ENCODE measurements at regions of chr5 and their contacts with region 1.

Region 1: GRCh38 chr5:134904630-134905245 is at the start of gene PCBD2:
- DNase-seq: peak; percentile 73
- ATAC-seq: peak; percentile 88
- H3K4me3 ChIP-seq: peak within 1 kb of the TSS; percentile 83
- H3K27ac ChIP-seq: peak within 1 kb of the TSS; percentile 91
- H3K4me1 ChIP-seq: peaks cover 24% of the 10 kb centered on the region
- H3K27me3 ChIP-seq: no peaks in the 10 kb centered on the region
- CTCF ChIP-seq: peak; percentile 97 to 98 (median 98)
- EP300 ChIP-seq: no peak
- POLR2A ChIP-seq: peak; percentile 82
- RAD21 ChIP-seq: peak; percentile 92
- polyA plus RNA-seq, gene PCBD2: 6.7 to 7.0 TPM

Region 2: DNA sequence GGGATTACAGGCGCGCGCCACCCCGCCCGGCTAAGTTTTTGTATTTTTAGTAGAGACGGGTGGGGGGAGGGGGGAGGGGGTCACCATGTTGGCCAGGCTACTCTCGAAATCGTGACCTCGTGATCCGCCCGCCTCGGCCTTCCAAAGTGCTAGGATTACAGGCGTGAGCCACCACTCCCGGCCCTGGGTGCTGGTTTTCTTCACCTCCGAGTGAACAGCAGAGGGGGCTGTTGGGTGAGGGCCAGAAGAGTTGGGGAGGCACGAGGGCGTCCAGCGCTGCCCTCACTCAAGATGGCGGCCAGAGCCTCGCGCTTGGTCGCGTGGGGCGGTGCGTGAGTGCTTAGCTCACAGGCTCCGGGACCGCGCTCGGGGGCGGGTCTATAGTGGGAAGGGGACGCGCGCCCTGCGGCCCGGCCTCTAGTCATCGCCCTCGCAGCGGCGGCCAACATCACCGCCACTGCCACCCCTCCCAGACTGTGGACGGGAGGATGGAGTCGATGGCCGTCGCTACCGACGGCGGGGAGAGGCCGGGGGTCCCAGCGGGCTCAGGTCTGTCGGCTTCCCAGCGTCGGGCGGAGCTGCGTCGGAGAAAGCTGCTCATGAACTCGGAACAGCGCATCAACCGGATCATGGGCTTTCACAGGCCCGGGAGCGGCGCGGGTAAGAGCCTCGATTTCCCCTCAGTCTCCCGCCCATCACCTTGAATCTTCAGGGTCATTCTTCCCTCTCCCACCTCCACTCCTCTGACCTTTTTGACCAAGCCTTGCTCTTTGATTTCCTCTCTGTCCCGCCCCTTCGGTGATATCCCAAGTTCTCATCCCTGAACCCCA is 166.4 kb before region 1 on chr5 and contains the start of gene CAMLG:
- CTCF ChIA-PET with region 1: interaction called, 43 read pairs
- POLR2A ChIA-PET with region 1: interaction called, 22 read pairs
- RAD21 ChIA-PET with region 1: interaction called, 14 read pairs
- SMC1A ChIA-PET with region 1: interaction called, 11 read pairs
- in situ Hi-C with region 1: loop called (anchors 5 kb)
- intact Hi-C with region 1: loop called (anchors 1 kb)
- DNase-seq: peak; percentile 92
- ATAC-seq: peak; percentile 97
- H3K4me3 ChIP-seq: peak within 1 kb of the TSS; percentile 90
- H3K27ac ChIP-seq: peak within 1 kb of the TSS; percentile 71
- H3K4me1 ChIP-seq: no peaks in the 10 kb centered on the region
- H3K27me3 ChIP-seq: no peaks in the 10 kb centered on the region
- CTCF ChIP-seq: peak; percentile 67 to 84 (median 74)
- EP300 ChIP-seq: no peak
- POLR2A ChIP-seq: peak; percentile 97
- RAD21 ChIP-seq: peak; percentile 60
- polyA plus RNA-seq, gene CAMLG: 27.0 to 51.7 TPM

Region 3: DNA sequence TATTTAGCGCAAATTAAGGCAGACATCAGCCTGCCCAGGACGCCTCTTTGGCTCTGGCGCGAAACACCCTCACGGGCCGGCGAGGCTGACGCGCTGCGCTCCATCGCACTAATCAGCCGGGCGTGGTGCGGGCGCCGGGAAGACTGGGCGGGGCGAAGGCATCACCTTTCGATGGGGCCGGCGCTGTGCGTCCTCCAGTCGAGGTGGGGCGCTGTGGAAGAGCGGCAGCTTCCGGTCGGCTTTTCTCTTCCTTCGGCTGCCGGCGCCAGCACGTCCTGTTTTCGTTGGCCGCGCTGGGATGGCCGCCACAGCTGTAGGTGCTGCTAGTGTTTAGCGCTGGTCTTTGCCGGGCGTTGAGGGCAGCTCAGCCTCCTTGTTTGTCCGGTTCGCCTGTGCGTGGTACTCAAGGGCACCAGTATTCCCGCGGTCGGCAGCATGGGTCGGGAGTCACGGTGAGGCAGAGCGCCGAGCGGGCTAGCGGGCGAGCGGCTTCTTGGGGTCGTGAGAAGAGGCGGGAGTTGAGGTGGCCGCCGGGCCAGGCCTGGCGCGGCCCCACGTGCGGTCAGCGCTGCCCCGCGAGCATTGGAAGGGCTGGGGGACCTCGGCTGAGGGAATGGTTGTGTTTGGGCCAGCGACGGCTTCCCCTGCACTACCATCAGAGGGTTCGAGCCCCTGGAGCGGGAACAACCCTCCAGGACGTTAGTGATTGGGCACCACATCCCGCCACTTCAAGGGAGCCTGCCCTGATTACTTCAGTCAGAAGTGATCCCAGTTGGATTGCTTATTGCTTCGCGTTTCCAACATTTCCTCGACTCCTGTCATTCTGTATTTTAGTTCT is 146.0 kb before region 1 on chr5 and contains the start of gene DDX46:
- CTCF ChIA-PET with region 1: interaction called, 11 read pairs
- POLR2A ChIA-PET with region 1: interaction called, 5 read pairs
- RAD21 ChIA-PET with region 1: interaction called, 16 read pairs
- SMC1A ChIA-PET with region 1: interaction called, 6 read pairs
- in situ Hi-C with region 1: no loop called
- intact Hi-C with region 1: no loop called
- DNase-seq: peak; percentile 64
- ATAC-seq: peak; percentile 98
- H3K4me3 ChIP-seq: peak within 1 kb of the TSS; percentile 82
- H3K27ac ChIP-seq: peak within 1 kb of the TSS; percentile 68
- H3K4me1 ChIP-seq: no peaks in the 10 kb centered on the region; the same call in 1 of the 2 replicates
- H3K27me3 ChIP-seq: no peaks in the 10 kb centered on the region
- CTCF ChIP-seq: peak; percentile 88 to 96 (median 90)
- EP300 ChIP-seq: no peak
- POLR2A ChIP-seq: peak; percentile 95
- RAD21 ChIP-seq: no peak
- polyA plus RNA-seq, gene DDX46: 23.0 to 31.3 TPM

Region 4: DNA sequence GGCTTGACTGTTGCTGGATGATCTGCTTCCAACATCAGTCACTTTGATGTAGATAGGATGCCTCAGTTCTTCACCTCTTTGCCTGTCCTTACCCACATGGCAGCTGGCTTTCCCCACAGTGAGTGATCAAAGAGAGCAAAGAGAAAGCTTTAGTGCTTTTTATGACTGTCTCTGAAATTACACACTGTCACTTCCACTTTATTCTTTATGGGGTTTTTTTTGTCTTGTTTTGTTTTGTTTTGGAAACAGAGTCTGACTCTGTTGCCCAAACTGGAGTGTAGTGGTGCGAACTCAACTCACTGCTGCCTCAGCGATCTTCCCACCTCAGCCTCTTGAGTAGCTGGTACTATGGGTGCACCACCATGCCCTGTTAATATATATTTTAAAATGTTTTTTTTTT is 91.3 kb before region 1 on chr5:
- CTCF ChIA-PET with region 1: interaction called, 4 read pairs
- POLR2A ChIA-PET with region 1: interaction called, 7 read pairs
- RAD21 ChIA-PET with region 1: interaction called, 5 read pairs
- SMC1A ChIA-PET with region 1: interaction called, 3 read pairs
- in situ Hi-C with region 1: no loop called
- intact Hi-C with region 1: loop called (anchors 5 kb)
- DNase-seq: peak; percentile 17
- ATAC-seq: peak; percentile 92
- H3K4me3 ChIP-seq: no peak overlapping the region
- H3K27ac ChIP-seq: no peak overlapping the region
- H3K4me1 ChIP-seq: peaks cover 16% of the 10 kb centered on the region
- H3K27me3 ChIP-seq: no peaks in the 10 kb centered on the region
- CTCF ChIP-seq: no peak
- EP300 ChIP-seq: no peak
- POLR2A ChIP-seq: no peak
- RAD21 ChIP-seq: no peak

Region 5: DNA sequence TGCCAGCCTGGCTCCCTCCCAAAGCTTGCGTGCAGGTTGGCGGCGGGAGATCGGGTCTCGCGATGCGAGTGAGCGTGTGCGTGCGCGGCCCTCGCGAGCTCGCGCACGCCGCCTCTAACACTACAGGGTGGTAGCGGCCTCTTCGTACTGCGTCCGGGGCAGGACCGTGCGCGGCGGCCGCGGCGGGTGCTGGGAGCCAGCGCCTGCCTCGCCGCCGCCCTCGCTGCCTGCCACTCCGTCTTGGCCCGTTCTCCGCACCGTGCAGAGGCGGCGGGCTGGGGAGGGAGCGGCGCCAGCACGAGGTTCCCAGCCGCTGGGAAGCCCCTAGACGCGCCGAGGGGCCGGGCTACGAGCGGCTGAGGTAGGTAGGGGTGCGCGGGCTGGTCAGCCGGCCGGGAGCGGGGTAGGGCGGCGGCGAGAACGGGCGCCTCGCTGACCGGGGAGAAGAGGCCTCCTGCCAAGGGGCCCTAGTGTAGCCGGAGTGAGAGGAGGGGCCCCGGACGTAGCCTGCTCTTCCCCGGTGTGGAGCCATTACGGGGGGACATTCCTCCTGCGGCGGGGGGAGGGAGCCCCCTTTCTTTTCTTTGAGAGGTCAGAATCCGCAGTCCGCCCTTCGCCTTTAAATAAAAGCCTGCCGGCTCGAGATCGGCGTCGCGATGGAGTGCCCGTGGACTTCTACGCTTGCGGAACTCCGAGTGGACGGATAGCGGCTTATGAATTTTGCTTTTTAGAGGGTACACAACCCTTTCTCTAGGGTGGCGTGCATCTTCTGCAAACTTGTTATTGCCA is 58.7 kb before region 1 on chr5 and contains the start of gene C5orf24:
- CTCF ChIA-PET with region 1: interaction called, 9 read pairs
- POLR2A ChIA-PET with region 1: interaction called, 5 read pairs
- RAD21 ChIA-PET with region 1: interaction called, 15 read pairs
- SMC1A ChIA-PET with region 1: interaction called, 8 read pairs
- in situ Hi-C with region 1: no loop called
- intact Hi-C with region 1: loop called (anchors 1 kb)
- DNase-seq: peak; percentile 90
- ATAC-seq: peak; percentile 95
- H3K4me3 ChIP-seq: peak within 1 kb of the TSS; percentile 84
- H3K27ac ChIP-seq: peak within 1 kb of the TSS; percentile 92
- H3K4me1 ChIP-seq: peaks cover 10% of the 10 kb centered on the region
- H3K27me3 ChIP-seq: no peaks in the 10 kb centered on the region
- CTCF ChIP-seq: no peak
- EP300 ChIP-seq: no peak
- POLR2A ChIP-seq: peak; percentile 98
- RAD21 ChIP-seq: no peak
- polyA plus RNA-seq, gene C5orf24: 5.4 to 5.6 TPM

Region 6: DNA sequence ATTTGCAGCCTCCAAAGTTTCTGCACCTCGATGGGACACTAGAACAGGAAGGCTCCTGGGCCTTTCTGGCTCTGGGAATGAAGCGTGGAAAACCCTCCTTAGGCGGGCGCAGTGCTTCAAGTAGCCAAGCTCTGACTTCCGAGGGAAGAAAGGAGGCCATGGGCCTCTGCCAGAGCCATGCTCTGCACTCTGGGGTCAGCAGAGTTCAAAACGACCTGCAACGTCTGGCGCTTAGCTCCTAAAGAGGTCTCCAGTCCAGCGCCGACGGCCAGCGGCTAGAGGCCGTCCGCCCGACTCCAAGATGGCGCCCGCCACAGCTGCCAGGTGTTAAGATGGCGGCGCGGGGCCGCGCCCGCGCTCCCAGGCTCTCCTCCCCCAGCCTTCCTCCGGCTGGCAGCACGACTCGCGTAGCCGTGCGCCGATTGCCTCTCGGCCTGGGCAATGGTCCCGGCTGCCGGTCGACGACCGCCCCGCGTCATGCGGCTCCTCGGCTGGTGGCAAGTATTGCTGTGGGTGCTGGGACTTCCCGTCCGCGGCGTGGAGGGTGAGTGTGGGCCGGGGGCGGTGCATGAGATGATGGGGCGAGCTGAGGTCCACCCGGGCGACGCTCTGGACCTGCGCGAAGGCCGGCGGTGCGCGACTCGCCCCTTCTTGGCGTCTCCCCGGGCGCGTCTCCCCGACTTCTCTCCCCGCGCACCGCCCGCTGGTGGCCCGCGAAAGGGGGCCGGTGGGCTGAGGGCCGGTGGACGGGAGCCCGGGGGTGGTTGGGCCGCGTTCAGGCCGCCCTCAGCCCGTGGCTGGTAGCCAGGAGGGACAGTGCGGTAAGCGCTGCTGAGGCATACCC is 30.5 kb before region 1 on chr5 and contains the start of gene TXNDC15:
- CTCF ChIA-PET with region 1: interaction called, 6 read pairs
- POLR2A ChIA-PET with region 1: interaction called, 6 read pairs
- RAD21 ChIA-PET with region 1: interaction called, 11 read pairs
- SMC1A ChIA-PET with region 1: interaction called, 8 read pairs
- in situ Hi-C with region 1: no loop called
- intact Hi-C with region 1: loop called (anchors 1 kb)
- DNase-seq: peak; percentile 45
- ATAC-seq: peak; percentile 92
- H3K4me3 ChIP-seq: peak within 1 kb of the TSS; percentile 83
- H3K27ac ChIP-seq: peak within 1 kb of the TSS; percentile 88
- H3K4me1 ChIP-seq: peaks cover 18% of the 10 kb centered on the region
- H3K27me3 ChIP-seq: no peaks in the 10 kb centered on the region
- CTCF ChIP-seq: no peak
- EP300 ChIP-seq: no peak
- POLR2A ChIP-seq: peak; percentile 95
- RAD21 ChIP-seq: no peak
- polyA plus RNA-seq, gene TXNDC15: 8.1 to 17.9 TPM

Region 7: DNA sequence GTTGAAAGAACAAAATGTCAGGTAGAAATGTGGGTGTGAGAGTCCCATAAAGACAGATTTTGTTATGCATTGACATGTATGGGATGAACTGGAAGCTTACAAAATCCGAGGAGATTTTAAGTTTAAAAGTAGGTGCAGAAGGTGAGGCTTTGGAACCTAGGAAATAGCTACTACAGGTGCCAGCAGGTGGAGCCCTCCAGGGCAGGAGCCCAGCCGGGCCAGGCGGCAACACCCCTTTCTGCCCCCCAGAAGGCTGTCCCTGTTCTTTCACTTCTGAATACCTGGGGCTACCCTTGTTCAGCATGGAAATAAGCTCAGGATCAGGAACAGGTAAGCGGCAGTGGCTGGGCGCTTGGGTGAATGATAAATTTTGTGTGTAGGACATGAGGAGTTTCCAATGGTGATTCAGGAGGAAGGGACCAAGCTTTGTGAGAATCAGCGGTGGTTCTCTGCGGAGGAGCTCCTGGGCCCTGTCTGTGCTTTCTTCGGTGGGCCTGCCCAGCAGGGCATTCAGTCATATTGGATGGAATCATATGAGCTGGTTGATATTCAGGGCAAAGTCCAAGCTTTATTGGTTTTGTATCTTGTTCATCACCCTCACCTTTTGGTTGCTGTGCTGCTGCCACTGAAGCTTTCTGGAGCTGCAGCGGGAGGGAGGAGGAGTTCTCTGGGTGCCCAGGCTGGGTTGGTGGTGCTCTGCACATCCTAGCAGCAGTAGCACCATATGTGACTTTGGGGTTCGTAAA is 12.5 kb after region 1 on chr5:
- CTCF ChIA-PET with region 1: interaction called, 14 read pairs
- POLR2A ChIA-PET with region 1: interaction called, 4 read pairs
- RAD21 ChIA-PET with region 1: no interaction called
- SMC1A ChIA-PET with region 1: interaction called, 3 read pairs
- in situ Hi-C with region 1: no loop called
- intact Hi-C with region 1: no loop called
- DNase-seq: no peak
- ATAC-seq: peak; percentile 66
- H3K4me3 ChIP-seq: no peak overlapping the region
- H3K27ac ChIP-seq: no peak overlapping the region
- H3K4me1 ChIP-seq: no peaks in the 10 kb centered on the region
- H3K27me3 ChIP-seq: no peaks in the 10 kb centered on the region
- CTCF ChIP-seq: peak; percentile 23 to 51 (median 29); a peak in 4 of 6 replicates
- EP300 ChIP-seq: no peak
- POLR2A ChIP-seq: no peak
- RAD21 ChIP-seq: 0 out of 2 replicates have a peak, but pooled peaks have one; percentile 9

Region 8: DNA sequence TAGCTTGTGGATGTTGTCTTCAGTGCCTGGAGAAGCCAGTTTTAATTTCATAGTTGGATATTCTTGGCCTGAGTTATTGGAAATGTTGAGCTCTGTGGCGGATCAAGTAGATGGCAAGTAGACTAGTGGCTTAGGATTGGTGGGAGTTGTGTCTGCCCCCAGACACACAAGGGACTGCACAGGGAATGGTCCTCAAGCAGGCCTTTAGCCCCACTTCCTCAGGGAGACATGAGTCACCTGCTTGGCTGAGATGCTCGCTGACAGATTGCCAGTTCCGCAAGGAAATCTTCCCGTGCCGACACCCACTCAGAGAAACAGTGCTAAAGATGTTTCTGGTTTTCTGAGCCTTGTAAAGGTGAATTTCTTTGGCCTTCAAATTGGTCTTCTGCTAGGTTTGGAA is 44.2 kb after region 1 on chr5:
- CTCF ChIA-PET with region 1: no interaction called
- POLR2A ChIA-PET with region 1: no interaction called
- RAD21 ChIA-PET with region 1: no interaction called
- SMC1A ChIA-PET with region 1: no interaction called
- in situ Hi-C with region 1: no loop called
- intact Hi-C with region 1: no loop called
- DNase-seq: no peak
- ATAC-seq: no peak
- H3K4me3 ChIP-seq: no peak overlapping the region
- H3K27ac ChIP-seq: no peak overlapping the region
- H3K4me1 ChIP-seq: no peaks in the 10 kb centered on the region
- H3K27me3 ChIP-seq: no peaks in the 10 kb centered on the region
- CTCF ChIP-seq: no peak
- EP300 ChIP-seq: no peak
- POLR2A ChIP-seq: no peak
- RAD21 ChIP-seq: no peak